Activated T-helper 1 cell treated with anti-CD3 and anti-CD28 coated beads, Interleukin-12 subunit alpha, Interleukin-12 subunit beta, Interleukin-2, Interleukin-4 antibody, amounts not matched to agents 30 ng/mL and 10 ng/mL and 1 ng/mL, durations not matched to agents 14 hours and 24 hours and 36 hours (primary cell): ENCODE measurements at regions of chr11 and their contacts with region 1.

Region 1: GRCh38 chr11:59822989-59823566 is 12.5 kb upstream of the MRPL16 start:
- DNase-seq: no peak
- H3K4me3 Mint-ChIP-seq: no peak overlapping the region
- H3K27ac Mint-ChIP-seq: no peak overlapping the region
- H3K4me1 Mint-ChIP-seq: peaks cover 9% of the 10 kb centered on the region
- H3K27me3 Mint-ChIP-seq: peaks cover 8% of the 10 kb centered on the region

Region 2: GRCh38 chr11:59918987-59919589 is 96.0 kb after region 1 on chr11:
- intact Hi-C with region 1: loop called (anchors 1 kb)
- DNase-seq: no peak
- H3K4me3 Mint-ChIP-seq: no peak overlapping the region
- H3K27ac Mint-ChIP-seq: no peak overlapping the region
- H3K4me1 Mint-ChIP-seq: no peaks in the 10 kb centered on the region
- H3K27me3 Mint-ChIP-seq: no peaks in the 10 kb centered on the region

Region 3: DNA sequence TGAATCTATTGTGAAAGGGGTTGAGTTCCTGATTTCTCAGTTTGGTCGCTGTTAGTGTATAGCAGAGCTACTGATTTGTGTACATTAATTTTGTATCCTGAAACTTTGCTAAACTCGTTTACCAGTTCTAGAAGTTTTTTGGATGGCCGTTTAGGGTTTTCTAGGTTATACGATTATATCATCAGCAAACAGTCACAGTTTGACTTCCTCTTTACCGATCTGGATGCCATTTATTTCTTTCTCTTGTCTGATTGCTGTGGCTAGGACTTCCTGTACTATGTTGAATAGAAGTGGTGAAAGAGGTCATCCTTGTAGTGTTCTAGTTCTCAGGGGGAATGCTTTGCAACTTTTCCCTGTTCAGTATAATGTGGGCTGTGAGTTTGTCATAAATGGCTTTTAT is 169.3 kb after region 1 on chr11:
- intact Hi-C with region 1: loop called (anchors 1 kb)
- DNase-seq: no peak
- H3K4me3 Mint-ChIP-seq: no peak overlapping the region
- H3K27ac Mint-ChIP-seq: no peak overlapping the region
- H3K4me1 Mint-ChIP-seq: no peaks in the 10 kb centered on the region
- H3K27me3 Mint-ChIP-seq: no peaks in the 10 kb centered on the region

Region 4: GRCh38 chr11:60118338-60118737 is 295.3 kb after region 1 on chr11:
- intact Hi-C with region 1: no loop called
- DNase-seq: no peak
- H3K4me3 Mint-ChIP-seq: no peak overlapping the region
- H3K27ac Mint-ChIP-seq: no peak overlapping the region
- H3K4me1 Mint-ChIP-seq: no peaks in the 10 kb centered on the region
- H3K27me3 Mint-ChIP-seq: peaks cover 2% of the 10 kb centered on the region

Region 5: DNA sequence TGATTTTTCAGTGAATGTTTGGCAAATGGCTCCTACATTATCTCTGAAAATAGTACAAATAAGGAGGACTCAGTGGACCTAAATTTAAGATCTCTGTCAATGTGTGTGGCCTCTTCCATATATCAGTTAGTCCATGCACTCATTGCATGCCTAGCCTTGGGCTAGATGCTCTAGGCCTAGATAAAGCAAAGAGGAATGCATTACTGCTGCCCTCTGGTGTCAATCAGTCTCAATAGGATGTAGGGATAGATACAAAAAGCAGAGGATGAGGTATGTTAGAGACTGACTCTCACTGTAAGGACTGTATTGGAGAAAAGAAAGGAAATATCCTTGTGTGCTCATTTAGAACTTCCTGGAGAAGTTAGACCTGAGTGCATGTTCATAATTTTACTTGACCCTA is 307.4 kb after region 1 on chr11:
- intact Hi-C with region 1: loop called (anchors 1 kb)
- DNase-seq: no peak
- H3K4me3 Mint-ChIP-seq: no peak overlapping the region
- H3K27ac Mint-ChIP-seq: no peak overlapping the region
- H3K4me1 Mint-ChIP-seq: no peaks in the 10 kb centered on the region
- H3K27me3 Mint-ChIP-seq: no peaks in the 10 kb centered on the region

Region 6: DNA sequence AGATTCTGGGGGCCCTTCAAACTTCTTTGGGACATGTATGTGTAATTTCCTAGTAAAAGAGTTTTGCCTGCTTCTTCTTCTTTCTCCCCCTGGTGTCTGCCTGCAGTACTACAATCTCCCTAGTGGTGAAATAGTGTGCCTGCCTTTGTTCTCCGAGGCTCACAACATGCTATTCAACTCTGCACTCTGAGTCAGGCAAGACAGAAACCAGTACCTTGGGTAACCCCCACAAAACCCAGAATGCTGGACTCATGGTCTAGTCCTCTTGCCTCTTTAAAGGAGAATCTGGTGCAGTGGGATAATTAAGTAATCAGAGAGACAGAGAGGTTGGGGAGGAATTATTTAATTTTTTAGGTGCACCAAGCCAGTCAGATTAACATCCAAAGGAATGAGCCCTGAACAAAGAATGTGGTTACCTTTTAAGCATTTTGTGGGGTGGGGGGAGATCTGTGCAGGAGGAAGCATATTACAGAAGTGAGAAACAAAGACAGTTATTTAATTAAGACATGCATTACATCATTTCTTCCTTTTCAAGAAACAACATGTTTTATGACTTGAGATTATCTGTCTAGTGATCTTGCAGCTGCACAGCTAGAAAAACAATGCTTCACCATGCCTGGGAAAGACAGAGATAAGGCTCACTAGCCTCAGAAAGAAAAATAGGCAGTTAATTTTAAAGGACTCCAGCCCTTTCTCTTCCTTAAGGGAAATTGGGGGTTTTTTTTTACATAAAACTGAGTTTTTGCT is 370.8 kb after region 1 on chr11:
- intact Hi-C with region 1: loop called (anchors 1 kb)
- DNase-seq: peak; percentile 15
- H3K4me3 Mint-ChIP-seq: no peak overlapping the region
- H3K27ac Mint-ChIP-seq: no peak overlapping the region
- H3K4me1 Mint-ChIP-seq: no peaks in the 10 kb centered on the region
- H3K27me3 Mint-ChIP-seq: no peaks in the 10 kb centered on the region

Region 7: DNA sequence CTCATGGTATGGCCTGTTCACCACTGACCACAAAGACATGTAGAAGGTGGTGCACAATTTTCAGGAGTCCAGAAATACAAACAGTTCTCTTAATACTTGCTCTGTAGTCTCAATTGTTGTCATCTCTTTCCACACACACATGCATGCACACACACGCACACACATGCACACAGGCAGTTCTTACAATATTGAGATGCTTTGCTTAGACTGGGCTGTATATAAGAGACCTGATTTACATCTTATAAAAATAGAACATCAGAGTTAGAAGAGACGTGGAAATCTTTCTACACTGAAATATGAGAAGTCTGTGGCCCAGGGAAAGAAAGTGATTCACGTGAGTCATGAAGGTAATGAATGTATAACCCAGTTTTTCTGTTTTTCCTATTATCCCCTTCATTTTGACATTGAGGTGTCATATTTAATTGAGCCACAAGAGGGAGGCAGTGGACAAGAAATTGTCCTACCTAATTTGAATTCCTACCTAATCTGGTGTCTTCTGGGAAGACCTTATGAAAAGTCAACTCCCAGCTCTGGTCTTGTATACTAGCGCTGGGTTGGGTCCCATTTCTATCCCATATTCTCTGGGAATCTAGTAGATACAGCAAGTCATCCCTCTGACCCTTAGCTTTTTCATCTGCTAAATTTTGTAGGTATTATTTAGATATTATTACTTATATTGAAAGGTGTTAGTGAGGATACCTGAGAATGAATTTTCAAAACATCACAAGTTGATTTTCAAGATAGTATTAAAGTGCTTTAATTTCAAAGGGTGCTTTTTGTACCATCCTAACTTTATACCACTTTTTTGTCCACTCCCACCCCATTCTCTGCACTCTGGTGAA is 442.5 kb after region 1 on chr11:
- intact Hi-C with region 1: loop called (anchors 1 kb)
- DNase-seq: no peak
- H3K4me3 Mint-ChIP-seq: no peak overlapping the region
- H3K27ac Mint-ChIP-seq: no peak overlapping the region
- H3K4me1 Mint-ChIP-seq: no peaks in the 10 kb centered on the region
- H3K27me3 Mint-ChIP-seq: no peaks in the 10 kb centered on the region